ENCODE measurements at regions of chr20 and their contacts with region 1.

Region 1: DNA sequence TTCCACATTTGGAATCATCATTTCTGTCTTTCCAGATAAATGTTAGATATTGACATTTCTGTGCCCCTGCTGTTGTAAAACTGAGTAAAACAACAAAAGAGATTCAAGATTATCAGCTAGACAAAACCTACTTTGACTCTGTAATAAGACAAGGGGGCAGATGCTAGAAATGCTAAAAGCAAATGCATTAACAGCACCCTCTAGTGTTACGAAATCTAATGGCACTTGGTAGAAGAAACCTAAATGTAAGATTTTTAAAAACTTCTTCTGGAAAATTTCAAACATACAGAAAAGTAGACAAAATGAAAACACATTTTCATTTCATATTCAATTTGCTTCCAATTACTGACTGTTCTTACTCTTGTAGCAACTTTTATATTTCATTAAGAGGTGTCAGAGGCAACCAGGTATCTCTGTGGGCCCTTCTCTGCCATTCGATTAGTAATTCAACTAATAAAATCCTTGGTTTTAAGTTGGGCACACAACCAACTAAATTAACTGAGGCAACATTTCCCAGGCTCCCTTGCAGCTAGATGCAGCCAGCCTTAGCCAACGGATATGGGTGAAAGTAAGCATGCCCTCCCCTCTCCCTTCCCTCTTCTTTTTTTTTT is 45.0 kb downstream of the SLC23A2 start:
- DNase-seq: peak; percentile 61
- H3K4me3 ChIP-seq: no peak overlapping the region; a peak in 1 of 4 replicates
- H3K27ac ChIP-seq: no peak overlapping the region
- H3K4me1 ChIP-seq: no peaks in the 10 kb centered on the region
- H3K27me3 ChIP-seq: no peaks in the 10 kb centered on the region
- CTCF ChIP-seq: peak; percentile 94
- EP300 ChIP-seq: no peak
- RAD21 ChIP-seq: peak; percentile 89

Region 2: GRCh38 chr20:4942331-4942730 is 14.0 kb before region 1 on chr20:
- CTCF ChIA-PET with region 1: interaction called, 10 read pairs
- POLR2A ChIA-PET with region 1: no interaction called
- DNase-seq: no peak
- H3K4me3 ChIP-seq: no peak overlapping the region
- H3K27ac ChIP-seq: no peak overlapping the region
- H3K4me1 ChIP-seq: no peaks in the 10 kb centered on the region
- H3K27me3 ChIP-seq: no peaks in the 10 kb centered on the region
- CTCF ChIP-seq: no peak
- EP300 ChIP-seq: no peak
- RAD21 ChIP-seq: no peak

Region 3: DNA sequence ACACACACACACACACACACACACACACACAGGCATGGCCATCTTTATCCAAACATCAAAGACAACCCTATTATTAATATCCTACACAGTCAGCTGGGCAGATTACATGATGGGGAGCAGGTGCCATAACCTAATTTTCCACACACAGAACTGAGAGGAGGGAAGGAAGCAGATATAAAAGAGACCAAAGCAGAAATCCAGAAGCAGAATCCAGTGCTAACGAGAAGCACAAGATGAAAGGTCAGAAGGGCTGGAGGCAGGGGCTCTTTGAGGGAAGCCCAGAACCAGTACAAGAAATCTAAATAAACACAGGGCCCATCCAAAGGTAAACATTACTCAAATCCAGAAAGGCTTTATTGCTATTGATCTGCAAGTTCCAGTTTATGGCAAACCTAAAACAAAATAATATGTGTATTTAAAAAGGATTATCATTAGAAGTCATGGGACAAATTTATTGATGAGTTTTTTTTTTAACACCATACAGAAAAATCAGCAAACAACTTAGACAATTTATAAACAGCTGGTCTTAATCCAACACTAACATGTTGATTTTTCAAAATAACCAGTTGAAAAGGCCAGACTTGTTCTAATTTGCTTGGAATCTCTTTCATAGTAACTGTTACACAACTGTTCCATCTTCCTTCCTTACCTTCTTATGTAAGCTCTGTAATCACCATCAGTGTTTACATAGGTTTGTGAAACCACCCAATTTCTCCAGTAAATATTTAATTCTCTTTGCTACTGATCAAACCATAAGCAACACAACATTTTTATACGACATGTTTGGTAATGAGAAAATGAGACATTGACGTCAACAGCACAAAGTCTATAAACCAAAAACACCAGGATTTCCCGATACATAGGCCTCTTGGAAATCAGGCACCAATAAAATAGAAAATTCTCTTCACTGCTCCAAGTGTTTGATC is 10.8 kb after region 1 on chr20:
- CTCF ChIA-PET with region 1: interaction called, 16 read pairs
- POLR2A ChIA-PET with region 1: no interaction called
- DNase-seq: peak; percentile 37
- H3K4me3 ChIP-seq: no peak overlapping the region
- H3K27ac ChIP-seq: peak overlapping the region in 1 of 2 experiments; percentile 16; a peak in 1 of 4 replicates
- H3K4me1 ChIP-seq: no peaks in the 10 kb centered on the region; a peak in 1 of 4 replicates
- H3K27me3 ChIP-seq: no peaks in the 10 kb centered on the region
- CTCF ChIP-seq: no peak
- EP300 ChIP-seq: peak in 1 of 2 experiments; percentile 55; a peak in 1 of 4 replicates
- RAD21 ChIP-seq: peak; percentile 22

Region 4: DNA sequence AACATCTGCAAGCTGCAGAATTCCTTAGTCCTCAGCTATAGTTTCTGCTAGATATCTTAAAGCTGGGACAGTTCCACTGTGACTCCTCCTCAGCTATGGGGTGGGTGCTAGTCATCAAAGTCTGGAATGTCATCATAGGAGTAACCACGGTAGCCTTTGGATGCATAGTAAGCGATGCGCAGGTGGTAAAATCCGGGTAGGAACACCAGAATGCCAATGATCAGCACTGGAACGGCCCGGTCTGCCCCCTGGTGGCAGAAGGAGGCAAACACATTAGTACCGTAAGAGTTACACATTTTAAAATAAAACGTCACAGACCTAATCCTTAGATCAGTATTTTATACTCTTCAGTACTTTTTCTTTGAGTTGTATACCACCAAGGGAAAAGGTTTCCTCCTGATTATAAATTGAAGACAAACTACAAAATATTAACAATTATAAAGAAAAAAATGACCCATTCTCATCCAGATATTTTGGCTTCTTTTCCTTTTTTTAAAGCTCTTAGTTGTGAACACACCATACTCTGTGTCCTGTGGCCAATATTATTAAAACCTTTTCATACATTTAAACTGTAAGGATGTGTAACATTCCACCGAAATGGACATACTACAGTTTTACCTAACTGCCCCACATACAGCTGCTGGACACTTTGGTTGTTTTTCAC is 144.5 kb after region 1 on chr20:
- CTCF ChIA-PET with region 1: interaction called, 19 read pairs
- POLR2A ChIA-PET with region 1: no interaction called
- DNase-seq: peak; percentile 72
- H3K4me3 ChIP-seq: no peak overlapping the region; a peak in 1 of 4 replicates
- H3K27ac ChIP-seq: no peak overlapping the region
- H3K4me1 ChIP-seq: no peaks in the 10 kb centered on the region
- H3K27me3 ChIP-seq: no peaks in the 10 kb centered on the region
- CTCF ChIP-seq: peak; percentile 93
- EP300 ChIP-seq: no peak
- RAD21 ChIP-seq: peak; percentile 79

Measured in SK-N-SH (cell line).